B cell (primary cell): ENCODE measurements at regions of chr20 and their contacts with region 1.

Region 1: DNA sequence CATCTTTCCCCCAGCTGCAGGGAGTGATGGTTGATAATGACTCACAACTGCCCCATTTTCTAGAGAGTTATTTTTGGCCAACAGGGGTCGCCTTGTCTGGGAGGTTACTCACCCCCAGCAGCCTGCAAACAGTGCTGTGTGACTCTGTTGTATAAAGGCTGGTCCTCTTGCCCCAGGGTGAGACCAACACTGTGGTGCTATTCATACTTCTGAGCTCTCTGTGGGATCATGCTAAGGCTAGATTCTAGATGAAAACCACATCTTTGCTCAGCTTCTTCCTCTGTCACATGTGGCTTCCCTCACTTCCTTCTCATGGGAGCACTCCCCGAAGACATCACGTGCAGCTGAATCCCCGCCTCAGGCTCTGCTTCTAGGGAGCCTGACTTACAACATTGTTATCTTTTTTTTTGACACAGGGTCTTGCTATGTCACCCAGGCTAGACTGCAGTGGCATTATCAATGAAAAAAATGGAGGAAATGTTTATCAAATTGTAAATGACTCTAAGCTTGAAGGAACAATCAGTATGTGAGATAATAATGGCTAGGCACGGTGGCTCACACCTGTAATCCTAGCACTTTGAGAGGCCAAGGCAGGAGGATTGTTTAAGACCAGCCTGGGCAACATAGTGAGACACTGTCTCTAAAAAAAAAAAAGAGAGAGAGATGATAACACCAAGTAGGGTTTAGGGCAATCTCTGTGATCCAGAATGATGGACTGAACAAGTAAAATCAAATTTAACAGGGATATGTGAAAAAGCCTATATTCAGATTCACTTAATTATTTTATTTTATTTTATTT is 55.7 kb upstream of the SLC23A2 start:
- DNase-seq: peak; percentile 67
- ATAC-seq: peak; percentile 88
- H3K4me3 ChIP-seq: peak overlapping the region in 2 of 5 experiments; percentile 1 to 7
- H3K4me3 Mint-ChIP-seq: peak overlapping the region; percentile 20
- H3K27ac ChIP-seq: peak overlapping the region in 1 of 2 donors; percentile 53
- H3K27ac Mint-ChIP-seq: peak overlapping the region; percentile 80
- H3K4me1 ChIP-seq: peaks cover 8% of the 10 kb centered on the region in 2 donors
- H3K4me1 Mint-ChIP-seq: peaks cover 13% of the 10 kb centered on the region
- H3K27me3 ChIP-seq: no peaks in the 10 kb centered on the region
- H3K27me3 Mint-ChIP-seq: no peaks in the 10 kb centered on the region
- CTCF ChIP-seq: peak; percentile 59

Region 2: GRCh38 chr20:5072756-5073659 is 16.0 kb after region 1 on chr20:
- CTCF ChIA-PET with region 1: interaction called, 13 read pairs
- POLR2A ChIA-PET with region 1: no interaction called
- intact Hi-C with region 1: no loop called
- DNase-seq: no peak
- ATAC-seq: no peak
- H3K4me3 ChIP-seq: no peak overlapping the region
- H3K4me3 Mint-ChIP-seq: no peak overlapping the region
- H3K27ac ChIP-seq: no peak overlapping the region
- H3K27ac Mint-ChIP-seq: peak overlapping the region; percentile 32
- H3K4me1 ChIP-seq: peaks cover 4 to 9% of the 10 kb centered on the region in 2 donors
- H3K4me1 Mint-ChIP-seq: peaks cover 17% of the 10 kb centered on the region
- H3K27me3 ChIP-seq: no peaks in the 10 kb centered on the region
- H3K27me3 Mint-ChIP-seq: no peaks in the 10 kb centered on the region
- CTCF ChIP-seq: no peak

Region 3: DNA sequence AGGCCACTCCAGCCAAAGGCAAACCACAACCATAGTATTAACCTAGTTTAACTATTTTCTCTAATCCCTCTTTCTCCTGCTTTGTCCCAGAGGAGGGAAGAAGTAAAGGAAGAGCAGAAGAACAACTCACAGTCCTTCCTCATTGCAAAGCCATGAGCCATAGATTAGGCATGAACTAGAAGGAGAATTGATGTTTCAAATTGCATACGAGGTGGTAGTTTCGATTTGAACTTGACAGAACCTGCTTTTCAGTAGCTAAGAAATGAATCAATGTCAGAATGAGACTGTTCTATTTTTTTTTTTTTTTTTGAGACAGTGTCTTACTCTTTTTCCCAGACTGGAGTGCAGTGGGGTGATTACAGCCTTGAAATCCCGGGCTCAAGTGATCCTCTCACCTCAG is 211.4 kb after region 1 on chr20:
- CTCF ChIA-PET with region 1: no interaction called
- POLR2A ChIA-PET with region 1: no interaction called
- intact Hi-C with region 1: no loop called
- DNase-seq: no peak
- ATAC-seq: no peak
- H3K4me3 ChIP-seq: no peak overlapping the region
- H3K4me3 Mint-ChIP-seq: no peak overlapping the region
- H3K27ac ChIP-seq: no peak overlapping the region
- H3K27ac Mint-ChIP-seq: no peak overlapping the region
- H3K4me1 ChIP-seq: no peaks in the 10 kb centered on the region
- H3K4me1 Mint-ChIP-seq: peaks cover 7% of the 10 kb centered on the region
- H3K27me3 ChIP-seq: peaks cover 0 to 3% (median 0%) of the 10 kb centered on the region in 4 experiments
- H3K27me3 Mint-ChIP-seq: peaks cover 34% of the 10 kb centered on the region
- CTCF ChIP-seq: no peak